Activated CD4-positive, alpha-beta T cell treated with anti-CD3 and anti-CD28 coated beads for 36 hours (primary cell): ENCODE measurements at regions of chr10 and their contacts with region 1.

Region 1: GRCh38 chr10:110414563-110415309 is 83.0 kb upstream of the DUSP5 start:
- DNase-seq: peak; percentile 93
- ATAC-seq: peak; percentile 94
- H3K4me3 Mint-ChIP-seq: peak overlapping the region; percentile 34
- H3K27ac Mint-ChIP-seq: peak overlapping the region; percentile 91
- H3K4me1 Mint-ChIP-seq: peaks cover 72% of the 10 kb centered on the region
- H3K27me3 Mint-ChIP-seq: no peaks in the 10 kb centered on the region

Region 2: DNA sequence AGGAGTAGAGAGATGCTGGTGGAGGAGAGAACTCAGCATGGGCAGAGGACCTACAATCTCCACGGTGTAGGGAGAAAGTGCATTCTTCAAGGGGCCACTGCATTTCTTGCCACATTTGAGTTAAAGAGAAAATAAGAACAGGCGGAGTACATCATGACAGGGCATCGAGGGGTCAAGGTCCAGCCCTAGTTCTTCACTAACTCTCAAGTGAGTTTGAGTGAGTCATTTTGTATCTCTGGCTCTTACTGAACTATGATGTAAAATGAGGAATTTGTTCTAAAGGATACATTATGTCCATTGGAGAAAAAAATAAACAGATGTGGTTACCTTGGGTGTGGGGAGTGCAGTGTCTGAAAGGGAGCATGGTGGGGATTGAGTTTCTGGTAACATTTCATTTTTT is 674.3 kb before region 1 on chr10:
- CTCF ChIA-PET with region 1: no interaction called
- POLR2A ChIA-PET with region 1: no interaction called
- intact Hi-C with region 1: no loop called
- DNase-seq: no peak
- ATAC-seq: no peak
- H3K4me3 Mint-ChIP-seq: no peak overlapping the region
- H3K27ac Mint-ChIP-seq: no peak overlapping the region
- H3K4me1 Mint-ChIP-seq: no peaks in the 10 kb centered on the region
- H3K27me3 Mint-ChIP-seq: peaks cover 10% of the 10 kb centered on the region

Region 3: DNA sequence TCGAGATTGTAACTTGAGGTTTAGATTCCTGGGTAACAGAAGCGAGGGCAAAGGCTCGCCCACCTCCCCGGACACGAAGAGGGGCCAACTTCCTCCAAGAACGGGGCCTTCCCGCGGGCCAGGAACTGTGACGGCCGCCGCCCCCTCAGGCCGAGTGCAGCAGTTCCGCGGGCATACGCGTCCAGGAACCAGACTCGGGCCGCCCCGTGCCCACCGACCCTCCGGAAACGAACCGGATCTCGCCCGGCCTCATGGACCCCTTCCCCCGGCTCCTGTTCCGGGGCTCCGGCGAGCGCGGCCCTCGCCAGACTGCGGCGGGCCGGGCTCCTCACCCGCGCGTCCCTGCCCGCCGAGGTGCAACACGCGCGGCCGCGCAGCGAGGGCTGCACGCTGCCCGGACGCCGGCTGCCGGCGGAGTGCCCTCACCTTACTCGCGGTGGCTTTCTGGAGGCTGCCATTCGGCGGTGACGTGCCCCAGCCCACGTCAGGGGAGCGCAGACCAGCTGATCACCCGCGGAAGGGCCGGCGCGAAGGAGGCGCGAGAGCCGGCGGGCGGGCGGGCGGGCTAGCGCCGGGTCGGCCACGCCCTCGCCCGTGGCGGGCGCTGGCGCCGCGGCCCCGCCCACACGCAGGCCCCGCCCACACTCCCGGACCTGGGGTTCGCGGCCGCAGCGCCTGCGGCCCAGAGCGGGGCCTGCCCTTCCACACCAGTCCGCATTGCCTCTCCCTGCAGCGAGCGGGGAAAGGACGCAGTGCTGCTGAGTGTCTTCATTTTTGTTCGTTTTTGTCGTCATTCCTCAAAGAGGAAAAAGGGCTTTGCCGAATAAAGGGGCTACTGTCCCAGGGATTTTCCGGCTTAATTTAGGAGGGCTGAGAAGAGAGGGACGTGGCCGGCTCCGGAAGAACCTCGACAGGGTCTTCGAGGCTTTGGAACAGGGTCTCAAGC is 491.5 kb before region 1 on chr10 and contains the start of gene XPNPEP1:
- CTCF ChIA-PET with region 1: no interaction called
- POLR2A ChIA-PET with region 1: no interaction called
- intact Hi-C with region 1: loop called in 1 of 2 experiments (anchors 5 kb)
- DNase-seq: peak; percentile 90
- ATAC-seq: peak; percentile 90
- H3K4me3 Mint-ChIP-seq: peak within 1 kb of the TSS; percentile 94
- H3K27ac Mint-ChIP-seq: peak within 1 kb of the TSS; percentile 94
- H3K4me1 Mint-ChIP-seq: peaks cover 48% of the 10 kb centered on the region
- H3K27me3 Mint-ChIP-seq: no peaks in the 10 kb centered on the region
- total RNA-seq, gene XPNPEP1: 85.4 to 91.2 TPM

Region 4: GRCh38 chr10:110368002-110368401 is 46.7 kb before region 1 on chr10:
- CTCF ChIA-PET with region 1: interaction called, 12 read pairs
- POLR2A ChIA-PET with region 1: interaction called, 5 read pairs
- intact Hi-C with region 1: loop called (anchors 1 to 2 kb)
- DNase-seq: peak; percentile 27
- ATAC-seq: no peak
- H3K4me3 Mint-ChIP-seq: no peak overlapping the region
- H3K27ac Mint-ChIP-seq: no peak overlapping the region
- H3K4me1 Mint-ChIP-seq: peaks cover 70% of the 10 kb centered on the region
- H3K27me3 Mint-ChIP-seq: no peaks in the 10 kb centered on the region

Region 5: GRCh38 chr10:110490616-110491015 is 75.9 kb after region 1 on chr10:
- CTCF ChIA-PET with region 1: no interaction called
- POLR2A ChIA-PET with region 1: no interaction called
- intact Hi-C with region 1: no loop called
- DNase-seq: no peak
- ATAC-seq: no peak
- H3K4me3 Mint-ChIP-seq: no peak overlapping the region
- H3K27ac Mint-ChIP-seq: no peak overlapping the region
- H3K4me1 Mint-ChIP-seq: peaks cover 23% of the 10 kb centered on the region
- H3K27me3 Mint-ChIP-seq: peaks cover 2% of the 10 kb centered on the region

Region 6: DNA sequence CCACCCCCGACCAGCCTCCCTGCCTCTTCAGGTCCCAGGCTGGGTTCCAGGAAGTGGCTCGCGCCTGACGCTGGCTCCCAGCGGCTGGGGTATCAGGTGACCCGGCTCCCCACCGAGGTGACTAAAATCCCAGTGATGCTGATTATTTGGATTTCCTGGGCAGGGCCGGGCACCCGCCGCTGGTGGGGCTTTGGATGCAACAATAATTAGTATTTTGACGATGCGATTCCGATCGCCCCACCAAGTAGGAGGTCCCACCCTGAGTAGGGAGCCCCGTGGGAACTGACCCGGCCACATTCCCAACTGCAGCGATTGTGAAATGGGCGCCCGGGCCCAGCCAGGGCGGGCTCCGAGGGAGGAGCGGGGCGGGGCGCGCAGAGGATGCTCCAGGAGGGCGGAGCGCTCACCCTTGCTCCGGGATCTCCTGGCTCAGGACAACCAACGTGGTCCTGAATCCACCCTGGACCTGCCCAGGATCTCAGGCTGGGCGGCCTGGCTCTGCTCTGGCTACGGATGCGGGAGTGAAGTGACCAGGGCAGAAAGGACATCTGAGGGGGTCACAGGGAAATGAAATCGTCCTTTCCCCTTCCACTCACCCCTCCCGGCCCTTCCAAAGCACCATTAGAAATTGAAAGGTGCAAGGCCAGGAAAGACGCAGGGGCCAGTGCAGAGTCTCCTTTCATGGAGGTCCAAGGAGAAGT is 115.5 kb after region 1 on chr10:
- CTCF ChIA-PET with region 1: no interaction called
- POLR2A ChIA-PET with region 1: no interaction called
- intact Hi-C with region 1: loop called (anchors 1 to 2 kb)
- DNase-seq: peak; percentile 38
- ATAC-seq: no peak
- H3K4me3 Mint-ChIP-seq: no peak overlapping the region
- H3K27ac Mint-ChIP-seq: no peak overlapping the region
- H3K4me1 Mint-ChIP-seq: peaks cover 60% of the 10 kb centered on the region
- H3K27me3 Mint-ChIP-seq: peaks cover 3% of the 10 kb centered on the region

Region 7: DNA sequence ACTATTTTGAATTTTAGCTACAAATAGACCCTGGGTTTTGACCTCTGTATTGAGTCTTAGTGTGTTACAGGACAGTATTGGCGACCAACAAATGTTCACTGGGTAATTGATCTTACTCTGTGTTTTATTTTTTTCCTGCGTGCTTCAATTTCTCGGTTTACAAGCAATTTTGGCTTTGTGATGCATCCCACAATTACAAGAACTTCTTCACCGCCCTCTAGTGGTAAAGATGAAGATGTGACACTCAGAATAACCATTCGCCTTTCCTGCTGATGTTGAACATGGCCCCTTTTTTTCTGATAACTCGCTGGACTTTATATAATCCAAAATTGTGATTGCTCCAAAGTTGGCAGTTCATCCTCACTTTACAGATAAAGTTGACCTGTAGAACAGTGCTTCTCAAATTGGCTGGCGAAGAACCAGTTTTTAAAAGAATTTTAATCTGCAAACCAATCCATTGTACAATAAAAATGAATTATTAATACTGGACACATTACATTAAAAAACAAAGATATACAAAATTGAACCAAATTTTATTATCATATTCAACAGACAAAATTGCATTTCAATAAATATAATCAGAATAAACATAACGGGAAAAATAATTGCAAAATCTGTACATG is 132.5 kb after region 1 on chr10:
- CTCF ChIA-PET with region 1: no interaction called
- POLR2A ChIA-PET with region 1: no interaction called
- intact Hi-C with region 1: loop called in 1 of 2 experiments (anchors 2 kb)
- DNase-seq: no peak
- ATAC-seq: peak; percentile 84
- H3K4me3 Mint-ChIP-seq: no peak overlapping the region
- H3K27ac Mint-ChIP-seq: peak overlapping the region; percentile 56
- H3K4me1 Mint-ChIP-seq: peaks cover 8% of the 10 kb centered on the region
- H3K27me3 Mint-ChIP-seq: peaks cover 6% of the 10 kb centered on the region

Region 8: GRCh38 chr10:110803830-110804338 is 389.1 kb after region 1 on chr10:
- CTCF ChIA-PET with region 1: no interaction called
- POLR2A ChIA-PET with region 1: no interaction called
- intact Hi-C with region 1: no loop called
- DNase-seq: peak; percentile 52
- ATAC-seq: peak; percentile 72
- H3K4me3 Mint-ChIP-seq: no peak overlapping the region
- H3K27ac Mint-ChIP-seq: peak overlapping the region; percentile 6
- H3K4me1 Mint-ChIP-seq: peaks cover 30% of the 10 kb centered on the region
- H3K27me3 Mint-ChIP-seq: no peaks in the 10 kb centered on the region